ENCODE measurements at regions of chr17 and their contacts with region 1.

Region 1: DNA sequence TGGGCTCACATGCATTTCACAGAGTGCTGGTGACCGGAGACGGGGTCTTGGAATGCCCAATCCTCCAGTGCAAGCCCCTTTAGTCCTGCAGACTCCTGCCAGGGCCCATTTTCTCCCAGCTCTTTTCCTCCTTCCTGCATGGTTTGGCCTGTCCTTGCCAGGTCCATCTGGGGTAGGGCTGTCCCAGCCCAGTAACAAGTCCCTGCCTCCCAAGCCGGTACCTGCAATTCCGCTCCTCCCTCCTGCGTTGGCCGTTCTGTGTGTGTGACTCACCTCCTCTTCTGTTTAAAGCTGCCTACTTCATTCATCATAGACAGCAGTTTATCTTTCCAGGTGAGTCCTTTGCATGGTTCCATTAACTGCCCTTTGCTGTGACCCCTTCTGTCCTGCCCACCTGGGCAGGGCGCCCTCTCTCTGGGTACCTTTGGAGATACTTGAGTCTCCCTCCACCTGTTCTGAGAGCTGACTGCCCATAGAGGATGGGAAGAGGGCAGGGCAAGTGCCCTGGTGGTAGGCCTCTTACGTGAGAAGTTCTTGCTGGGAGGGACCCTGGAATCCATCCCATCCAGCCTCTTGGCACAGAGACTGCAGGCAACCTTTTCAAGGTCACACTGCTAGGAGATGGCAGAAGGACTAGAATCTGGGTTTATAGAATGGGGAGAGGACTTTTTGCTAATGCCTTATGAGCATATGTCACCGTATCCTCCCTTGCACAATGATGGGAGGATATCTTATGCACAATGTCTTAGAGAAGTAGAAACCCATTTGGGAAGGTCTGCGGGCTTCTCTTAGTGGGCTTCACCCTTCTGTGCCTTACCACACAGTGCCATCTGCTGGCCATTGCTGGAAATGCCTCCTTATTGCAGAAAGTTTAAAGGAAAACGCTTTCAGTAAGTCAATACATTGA is 29.7 kb upstream of the LGALS9 start:
- DNase-seq: peak; percentile 65 to 90 (median 75)
- H3K4me3 ChIP-seq: no peak overlapping the region
- H3K27ac ChIP-seq: peak overlapping the region in 10 of 59 donors; percentile 7 to 61 (median 31)
- H3K27me3 ChIP-seq: no peaks in the 10 kb centered on the region
- CTCF ChIP-seq: peak; percentile 88 to 99 (median 96)

Region 2: DNA sequence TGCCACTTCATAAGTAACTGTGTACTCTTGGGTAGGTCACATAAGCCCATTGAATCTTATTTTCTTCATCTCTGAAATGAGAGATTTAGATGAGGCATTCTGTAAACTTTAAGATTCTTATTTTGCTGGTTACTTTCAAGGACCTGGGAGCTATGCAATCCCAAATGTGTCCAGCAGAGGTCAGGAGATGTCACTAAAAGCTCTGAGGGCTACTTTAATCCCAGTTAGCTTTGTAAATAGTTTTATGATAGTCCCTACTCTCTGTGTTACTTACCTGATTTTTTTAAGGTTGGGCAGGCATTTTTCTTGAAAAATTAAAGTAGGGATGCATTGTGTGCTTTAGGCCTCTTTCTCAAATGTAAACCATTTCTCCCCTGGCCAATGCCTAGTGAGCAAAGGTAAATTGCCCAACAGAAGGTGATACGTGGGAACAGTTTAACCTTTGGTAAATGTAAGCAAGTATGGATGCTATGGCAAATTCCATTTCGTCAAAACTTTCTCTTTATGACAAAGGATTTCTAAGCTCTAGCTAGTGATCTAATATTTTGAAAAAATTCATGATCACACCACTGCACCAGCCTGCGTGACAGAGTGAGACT is 364.5 kb before region 1 on chr17:
- intact Hi-C with region 1: loop called (anchors 2 kb)
- DNase-seq: peak in 8 of 10 donors; percentile 34 to 88 (median 68)
- H3K4me3 ChIP-seq: no peak overlapping the region
- H3K27ac ChIP-seq: no peak overlapping the region
- H3K27me3 ChIP-seq: no peaks in the 10 kb centered on the region
- CTCF ChIP-seq: peak; percentile 84 to 99 (median 95)

Region 3: DNA sequence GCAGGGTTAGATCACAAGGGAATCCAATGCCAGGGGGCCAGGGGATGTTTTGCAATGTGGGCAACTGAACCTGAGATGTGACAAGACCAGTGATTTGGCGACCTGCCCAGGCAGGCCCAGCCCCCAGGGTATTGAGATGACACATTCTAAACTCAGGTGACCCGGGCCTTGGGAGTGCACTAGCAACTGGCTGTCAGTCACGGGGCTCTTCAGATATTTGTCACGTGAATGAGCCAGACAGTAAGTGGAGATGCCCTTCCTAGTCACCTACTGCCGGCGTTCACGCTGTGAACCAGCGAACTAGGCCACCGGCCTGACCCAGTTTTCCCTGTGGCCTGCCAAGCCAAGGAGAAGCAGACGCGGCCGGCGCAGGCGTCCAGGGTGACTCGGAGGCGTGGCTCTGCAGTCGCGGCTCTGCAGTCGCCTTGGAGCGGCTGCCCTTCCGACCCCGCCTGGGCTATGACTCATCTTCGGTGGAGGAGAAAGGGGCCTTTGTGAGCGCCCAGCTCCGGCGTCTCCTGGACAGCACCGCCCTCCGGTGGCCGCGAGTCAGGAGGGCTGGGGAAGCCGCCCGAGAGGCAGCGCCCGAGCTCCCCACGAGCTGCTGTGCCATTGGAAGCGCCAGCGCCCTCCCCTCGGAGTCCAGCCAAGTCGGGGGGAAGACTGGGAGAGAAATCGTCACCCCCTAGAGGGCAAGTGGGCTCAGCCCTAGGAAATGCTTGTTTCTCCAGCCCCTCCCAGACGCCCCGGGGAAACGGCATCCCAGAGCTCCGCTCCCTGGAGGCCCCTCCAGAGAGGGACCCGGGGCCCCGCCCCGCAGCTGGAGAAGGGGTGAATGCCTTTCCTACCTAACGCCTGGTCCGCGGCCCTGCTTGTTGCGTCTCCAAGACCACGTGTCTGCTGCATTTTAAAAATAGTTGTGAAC is 268.6 kb before region 1 on chr17:
- intact Hi-C with region 1: loop called in 1 of 2 experiments (anchors 5 kb)
- DNase-seq: peak; percentile 85 to 98 (median 95)
- H3K4me3 ChIP-seq: peak overlapping the region; percentile 38 to 88 (median 65)
- H3K27ac ChIP-seq: peak overlapping the region; percentile 84 to 99 (median 96)
- H3K27me3 ChIP-seq: no peaks in the 10 kb centered on the region
- CTCF ChIP-seq: peak; percentile 51 to 99 (median 93)

Region 4: GRCh38 chr17:27455914-27456680 is 145.2 kb before region 1 on chr17 and contains the start of gene KSR1:
- intact Hi-C with region 1: loop called (anchors 1 to 2 kb)
- DNase-seq: peak; percentile 67 to 84 (median 77)
- H3K4me3 ChIP-seq: peak within 1 kb of the TSS; percentile 57 to 96 (median 88)
- H3K27ac ChIP-seq: peak within 1 kb of the TSS; percentile 44 to 96 (median 87)
- H3K27me3 ChIP-seq: no peaks in the 10 kb centered on the region
- CTCF ChIP-seq: peak in 55 of 56 donors; percentile 31 to 82 (median 67)
- total RNA-seq, gene KSR1: 44.7 to 102 (median 69.9) TPM

Region 5: GRCh38 chr17:27466743-27467375 is 134.5 kb before region 1 on chr17:
- intact Hi-C with region 1: no loop called
- DNase-seq: no peak
- H3K4me3 ChIP-seq: no peak overlapping the region
- H3K27ac ChIP-seq: peak overlapping the region in 6 of 59 donors; percentile 6 to 48 (median 15)
- H3K27me3 ChIP-seq: no peaks in the 10 kb centered on the region
- CTCF ChIP-seq: no peak

Region 6: GRCh38 chr17:27544350-27545131 is 56.8 kb before region 1 on chr17:
- intact Hi-C with region 1: loop called in 1 of 2 experiments (anchors 5 kb)
- DNase-seq: no peak
- H3K4me3 ChIP-seq: no peak overlapping the region
- H3K27ac ChIP-seq: no peak overlapping the region
- H3K27me3 ChIP-seq: no peaks in the 10 kb centered on the region
- CTCF ChIP-seq: no peak

Region 7: DNA sequence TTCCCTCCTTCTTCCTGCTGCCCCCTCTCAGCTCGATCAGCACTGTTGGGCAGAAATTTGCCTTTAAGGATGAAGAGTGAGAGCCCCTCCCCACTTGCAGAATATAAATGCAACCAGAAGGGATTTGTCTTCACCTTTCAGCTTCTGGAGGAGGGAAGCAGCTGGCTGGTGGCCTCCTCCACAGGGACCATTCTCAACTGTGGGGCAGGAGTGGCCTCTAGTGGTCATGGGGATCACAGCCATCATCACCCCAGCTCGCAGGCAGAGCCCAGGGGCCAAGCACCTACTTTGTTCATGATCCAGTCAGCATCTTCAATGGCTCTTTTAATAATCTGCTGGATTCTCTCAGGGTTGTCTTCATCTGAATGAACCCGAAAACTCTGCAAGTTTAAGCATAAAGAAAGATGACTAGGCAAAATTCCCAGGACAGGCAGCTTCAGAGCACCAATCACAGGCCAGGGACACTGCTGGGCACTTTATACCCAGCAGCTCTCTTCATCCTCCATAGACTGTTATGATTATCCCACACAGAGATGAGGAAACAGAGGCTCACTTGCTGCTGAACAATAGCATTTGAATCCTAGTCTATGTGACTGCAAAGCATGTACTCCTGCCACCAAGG is 278.8 kb after region 1 on chr17:
- intact Hi-C with region 1: loop called in 1 of 2 experiments (anchors 10 kb)
- DNase-seq: peak; percentile 68 to 86 (median 80)
- H3K4me3 ChIP-seq: no peak overlapping the region
- H3K27ac ChIP-seq: peak overlapping the region in 54 of 59 donors; percentile 24 to 87 (median 70)
- H3K27me3 ChIP-seq: no peaks in the 10 kb centered on the region
- CTCF ChIP-seq: peak; percentile 40 to 97 (median 87)